Activated CD8-positive, alpha-beta T cell treated with anti-CD3 and anti-CD28 coated beads, Interleukin-2, amount 10 ng/mL, durations not matched to agents 7 days and 5 days (primary cell): ENCODE measurements at regions of chr1 and their contacts with region 1.

Region 1: GRCh38 chr1:241998412-241998921 is 431 bp downstream of the MAP1LC3C start:
- DNase-seq: peak; percentile 63
- ATAC-seq: peak; percentile 84
- H3K4me3 Mint-ChIP-seq: peak overlapping the region; percentile 63
- H3K27ac Mint-ChIP-seq: no peak overlapping the region
- H3K4me1 Mint-ChIP-seq: peaks cover 6% of the 10 kb centered on the region
- H3K27me3 Mint-ChIP-seq: no peaks in the 10 kb centered on the region

Region 2: DNA sequence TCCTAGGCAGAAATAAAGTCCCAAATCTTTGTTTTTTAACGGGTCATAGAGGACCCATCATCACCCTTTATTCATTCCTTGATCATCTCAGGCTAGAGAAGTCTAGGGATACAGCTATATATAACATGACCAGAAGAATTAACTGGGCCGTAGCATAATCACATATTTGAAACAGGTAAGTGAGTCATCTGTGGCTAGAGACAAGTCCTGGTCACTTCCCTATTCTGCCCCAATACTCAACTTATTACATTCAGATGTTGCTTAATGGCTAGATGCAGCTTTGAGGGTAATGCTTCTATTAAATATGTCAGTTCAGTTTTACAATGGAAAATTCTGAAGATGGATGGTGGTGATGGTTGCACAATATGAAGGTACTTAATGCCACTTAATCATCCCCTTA is 103.5 kb before region 1 on chr1:
- CTCF ChIA-PET with region 1: interaction called, 19 read pairs
- POLR2A ChIA-PET with region 1: no interaction called
- DNase-seq: no peak
- ATAC-seq: no peak
- H3K4me3 Mint-ChIP-seq: no peak overlapping the region
- H3K27ac Mint-ChIP-seq: no peak overlapping the region
- H3K4me1 Mint-ChIP-seq: no peaks in the 10 kb centered on the region
- H3K27me3 Mint-ChIP-seq: no peaks in the 10 kb centered on the region